ENCODE measurements at regions of chr7 and their contacts with region 1.

Region 1: GRCh38 chr7:106009403-106010226 is 46.6 kb downstream of the CDHR3 start:
- DNase-seq: peak; percentile 85 to 87
- H3K4me3 ChIP-seq: no peak overlapping the region
- H3K4me3 Mint-ChIP-seq: peak overlapping the region; percentile 56
- H3K27ac Mint-ChIP-seq: peak overlapping the region; percentile 23
- H3K4me1 ChIP-seq: peaks cover 8% of the 10 kb centered on the region; the same call in 1 of the 2 replicates
- H3K4me1 Mint-ChIP-seq: peaks cover 19% of the 10 kb centered on the region
- H3K27me3 ChIP-seq: no peaks in the 10 kb centered on the region
- H3K27me3 Mint-ChIP-seq: peaks cover 3% of the 10 kb centered on the region
- CTCF ChIP-seq: peak; percentile 85 to 96

Region 2: DNA sequence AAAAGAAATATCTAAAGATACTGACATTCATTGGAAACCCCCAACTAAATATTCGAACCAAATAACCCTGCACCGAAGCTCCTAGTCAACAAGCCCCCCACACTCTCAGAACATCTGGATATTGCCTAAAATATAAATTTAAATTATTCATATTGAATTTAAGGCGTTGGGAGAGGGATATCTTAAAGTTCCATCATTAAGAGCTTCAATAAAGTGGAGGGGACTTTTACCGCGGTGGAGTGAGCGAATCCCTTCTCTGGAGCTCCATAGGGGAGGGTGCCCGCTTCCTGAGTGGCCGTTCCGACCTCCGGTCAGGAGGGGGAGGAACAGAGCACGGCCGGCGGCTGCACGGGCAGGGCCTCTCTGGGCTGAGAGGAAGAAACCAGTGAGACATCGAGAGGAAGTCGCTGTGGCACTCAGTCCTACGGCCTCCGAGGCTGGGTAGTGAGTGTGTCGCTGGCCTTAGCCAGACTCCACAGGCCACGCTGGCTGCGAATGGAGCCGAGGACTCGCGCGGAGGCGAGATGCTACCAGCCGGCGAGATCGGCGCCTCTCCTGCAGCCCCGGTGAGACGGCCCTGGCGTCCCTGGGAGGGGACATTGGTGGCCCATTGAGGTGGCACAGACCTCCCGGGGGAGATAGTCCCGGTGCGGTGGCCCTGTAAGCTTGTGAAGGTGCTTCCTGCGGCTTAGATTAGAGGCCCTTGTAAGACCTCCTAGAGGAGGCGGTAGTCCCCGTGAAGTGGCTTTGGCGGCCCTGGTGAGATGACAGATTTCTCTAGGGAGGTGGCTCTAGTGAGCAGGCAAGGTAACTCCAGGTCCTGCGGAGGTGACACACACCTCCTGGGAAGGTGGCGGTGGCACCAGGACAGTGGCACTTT is 477.6 kb before region 1 on chr7 and contains the start of gene RINT1:
- CTCF ChIA-PET with region 1: no interaction called
- POLR2A ChIA-PET with region 1: no interaction called
- intact Hi-C with region 1: no loop called
- DNase-seq: peak; percentile 92 to 96
- H3K4me3 ChIP-seq: peak within 1 kb of the TSS; percentile 90
- H3K4me3 Mint-ChIP-seq: peak within 1 kb of the TSS; percentile 65
- H3K27ac Mint-ChIP-seq: peak within 1 kb of the TSS; percentile 85
- H3K4me1 ChIP-seq: 0 out of 2 replicates have a peak, but pooled peaks cover 7% of the 10 kb centered on the region
- H3K4me1 Mint-ChIP-seq: peaks cover 7% of the 10 kb centered on the region
- H3K27me3 ChIP-seq: no peaks in the 10 kb centered on the region
- H3K27me3 Mint-ChIP-seq: no peaks in the 10 kb centered on the region
- CTCF ChIP-seq: peak; percentile 70 to 81
- total RNA-seq, gene RINT1: 23.9 and 28.0 TPM in 2 replicates

Region 3: GRCh38 chr7:105638902-105639495 is 370.6 kb before region 1 on chr7:
- CTCF ChIA-PET with region 1: no interaction called
- POLR2A ChIA-PET with region 1: no interaction called
- intact Hi-C with region 1: no loop called
- DNase-seq: no peak
- H3K4me3 ChIP-seq: no peak overlapping the region
- H3K4me3 Mint-ChIP-seq: no peak overlapping the region
- H3K27ac Mint-ChIP-seq: no peak overlapping the region
- H3K4me1 ChIP-seq: no peaks in the 10 kb centered on the region
- H3K4me1 Mint-ChIP-seq: no peaks in the 10 kb centered on the region
- H3K27me3 ChIP-seq: no peaks in the 10 kb centered on the region
- H3K27me3 Mint-ChIP-seq: no peaks in the 10 kb centered on the region
- CTCF ChIP-seq: no peak

Region 4: GRCh38 chr7:105934572-105935185 is 74.9 kb before region 1 on chr7:
- CTCF ChIA-PET with region 1: interaction called, 13 read pairs
- POLR2A ChIA-PET with region 1: no interaction called
- intact Hi-C with region 1: loop called (anchors 1 kb)
- DNase-seq: peak; percentile 50 to 59
- H3K4me3 ChIP-seq: no peak overlapping the region
- H3K4me3 Mint-ChIP-seq: no peak overlapping the region
- H3K27ac Mint-ChIP-seq: no peak overlapping the region
- H3K4me1 ChIP-seq: no peaks in the 10 kb centered on the region
- H3K4me1 Mint-ChIP-seq: peaks cover 1% of the 10 kb centered on the region
- H3K27me3 ChIP-seq: no peaks in the 10 kb centered on the region
- H3K27me3 Mint-ChIP-seq: no peaks in the 10 kb centered on the region
- CTCF ChIP-seq: peak; percentile 38 to 68

Region 5: GRCh38 chr7:105975770-105976422 is 33.7 kb before region 1 on chr7:
- CTCF ChIA-PET with region 1: no interaction called
- POLR2A ChIA-PET with region 1: no interaction called
- intact Hi-C with region 1: loop called (anchors 5 kb)
- DNase-seq: no peak
- H3K4me3 ChIP-seq: no peak overlapping the region
- H3K4me3 Mint-ChIP-seq: no peak overlapping the region
- H3K27ac Mint-ChIP-seq: no peak overlapping the region
- H3K4me1 ChIP-seq: no peaks in the 10 kb centered on the region
- H3K4me1 Mint-ChIP-seq: peaks cover 13% of the 10 kb centered on the region
- H3K27me3 ChIP-seq: no peaks in the 10 kb centered on the region
- H3K27me3 Mint-ChIP-seq: no peaks in the 10 kb centered on the region
- CTCF ChIP-seq: no peak

Region 6: DNA sequence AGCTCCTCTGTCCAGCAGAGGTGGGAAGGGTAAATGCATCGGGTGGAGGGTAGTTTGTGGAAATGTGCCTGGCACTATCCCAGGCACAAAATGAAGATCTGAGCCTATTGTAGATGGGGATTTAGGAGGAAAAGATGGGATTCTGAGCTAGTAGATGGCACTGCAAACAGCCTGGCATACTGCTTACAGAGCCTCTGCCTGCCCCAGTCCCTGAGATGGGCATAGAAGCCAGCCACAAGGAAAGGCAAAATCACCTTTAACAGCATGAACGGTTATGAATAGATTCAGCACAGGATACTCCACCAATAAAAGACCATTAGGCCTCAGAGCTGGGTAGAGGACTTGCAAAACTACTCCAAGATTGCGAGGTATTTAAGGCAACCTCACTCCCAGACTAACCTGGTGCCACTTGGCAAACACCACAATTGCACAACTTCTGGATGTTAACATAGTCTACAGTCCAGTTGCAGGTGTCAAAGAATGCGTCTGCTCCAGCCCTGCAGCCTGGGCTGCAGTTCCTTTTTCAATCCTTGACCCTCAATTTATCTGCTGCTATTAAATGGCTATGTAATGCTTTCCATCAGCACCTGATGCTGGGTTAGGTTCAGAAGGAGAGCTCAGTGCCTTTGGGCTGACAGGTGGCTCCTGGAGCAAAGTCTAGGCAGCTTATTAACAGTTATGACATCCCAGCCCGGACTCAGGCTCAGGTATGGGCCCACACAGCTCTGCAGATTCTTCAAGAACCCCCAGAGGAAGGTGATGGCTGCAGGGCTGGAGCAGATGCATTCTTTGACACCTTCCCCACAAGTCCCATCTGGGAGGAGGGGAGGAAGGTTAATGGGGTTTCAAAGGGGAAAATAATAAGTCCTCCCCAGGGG is 12.5 kb before region 1 on chr7:
- CTCF ChIA-PET with region 1: interaction called, 3 read pairs
- POLR2A ChIA-PET with region 1: no interaction called
- intact Hi-C with region 1: loop called (anchors 1 kb)
- DNase-seq: peak; percentile 50 to 61
- H3K4me3 ChIP-seq: no peak overlapping the region
- H3K4me3 Mint-ChIP-seq: no peak overlapping the region
- H3K27ac Mint-ChIP-seq: no peak overlapping the region
- H3K4me1 ChIP-seq: no peaks in the 10 kb centered on the region
- H3K4me1 Mint-ChIP-seq: peaks cover 14% of the 10 kb centered on the region
- H3K27me3 ChIP-seq: no peaks in the 10 kb centered on the region
- H3K27me3 Mint-ChIP-seq: no peaks in the 10 kb centered on the region
- CTCF ChIP-seq: no peak

Region 7: DNA sequence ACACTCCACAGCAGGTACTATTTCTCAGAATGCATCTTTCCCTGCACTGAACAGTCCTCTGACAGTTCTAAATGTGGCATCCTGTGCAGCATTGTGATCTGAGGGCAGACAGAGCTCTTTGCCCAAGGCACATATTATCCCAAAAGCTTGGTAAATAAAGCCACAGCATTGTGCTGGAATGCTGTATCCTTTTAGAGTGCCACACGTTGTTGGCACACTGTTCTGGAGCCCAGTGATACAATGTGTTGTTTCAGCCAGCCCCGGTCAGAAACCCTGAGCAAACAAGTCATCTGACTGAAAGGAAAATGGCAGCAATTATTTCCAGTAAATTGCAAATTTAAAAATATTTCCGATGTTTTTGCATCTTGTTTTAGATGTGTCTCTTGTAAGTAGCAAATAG is 229.8 kb after region 1 on chr7:
- CTCF ChIA-PET with region 1: no interaction called
- POLR2A ChIA-PET with region 1: no interaction called
- intact Hi-C with region 1: no loop called
- DNase-seq: no peak
- H3K4me3 ChIP-seq: no peak overlapping the region
- H3K4me3 Mint-ChIP-seq: no peak overlapping the region
- H3K27ac Mint-ChIP-seq: no peak overlapping the region
- H3K4me1 ChIP-seq: no peaks in the 10 kb centered on the region
- H3K4me1 Mint-ChIP-seq: peaks cover 8% of the 10 kb centered on the region
- H3K27me3 ChIP-seq: no peaks in the 10 kb centered on the region
- H3K27me3 Mint-ChIP-seq: no peaks in the 10 kb centered on the region
- CTCF ChIP-seq: no peak